ENCODE measurements at regions of chr2 and their contacts with region 1.

Region 1: DNA sequence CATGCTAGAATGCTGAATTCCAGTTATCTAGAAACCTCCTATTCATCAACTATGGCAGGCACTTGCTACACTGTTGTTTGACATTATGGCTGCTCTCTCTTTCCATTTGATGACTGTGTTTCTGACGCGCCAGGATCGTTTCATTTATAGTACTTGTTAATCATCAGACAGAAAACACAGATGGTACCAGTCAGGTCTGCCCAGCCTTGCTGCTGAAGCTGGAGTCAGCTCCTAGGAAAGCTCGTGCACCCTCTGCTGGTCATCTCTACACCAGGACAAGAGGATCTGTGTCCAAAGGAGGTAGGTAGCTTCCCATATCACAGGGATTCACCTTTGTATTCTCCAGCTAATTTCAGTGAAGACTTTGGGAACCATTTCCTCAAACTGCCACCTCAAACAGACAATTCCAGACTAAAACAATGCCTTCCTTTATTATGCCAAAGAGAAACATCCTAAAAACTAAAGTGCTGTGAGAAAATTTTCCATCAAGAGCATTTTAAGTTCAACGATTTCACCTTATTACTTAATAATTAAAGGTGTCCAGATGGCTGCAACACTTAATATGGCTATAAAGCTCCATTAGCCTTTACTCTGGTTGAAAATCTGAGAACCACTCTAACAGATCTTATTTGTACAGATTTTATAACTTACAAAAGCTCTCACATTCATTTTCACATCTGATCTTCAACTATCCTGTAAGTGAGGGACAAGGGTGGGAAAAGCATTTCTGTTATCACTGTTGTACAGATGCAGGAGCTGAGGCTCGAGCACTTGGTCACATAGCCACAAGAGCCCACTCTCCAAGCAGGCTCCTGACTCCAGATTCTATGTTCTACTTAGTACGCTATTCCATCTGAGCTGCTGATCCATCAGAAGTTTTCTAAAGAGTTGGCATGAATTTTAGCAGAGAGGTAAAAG is 17.5 kb downstream of the METTL8 start:
- DNase-seq: peak; percentile 89
- H3K4me3 Mint-ChIP-seq: no peak overlapping the region
- H3K27ac Mint-ChIP-seq: no peak overlapping the region
- H3K4me1 Mint-ChIP-seq: peaks cover 8% of the 10 kb centered on the region
- H3K27me3 Mint-ChIP-seq: no peaks in the 10 kb centered on the region

Region 2: GRCh38 chr2:170973492-170974303 is 442.6 kb before region 1 on chr2:
- CTCF ChIA-PET with region 1: interaction called, 36 read pairs
- DNase-seq: peak; percentile 83
- H3K4me3 Mint-ChIP-seq: peak overlapping the region; percentile 74
- H3K27ac Mint-ChIP-seq: peak overlapping the region; percentile 2
- H3K4me1 Mint-ChIP-seq: peaks cover 15% of the 10 kb centered on the region
- H3K27me3 Mint-ChIP-seq: peaks cover 6% of the 10 kb centered on the region

Region 3: DNA sequence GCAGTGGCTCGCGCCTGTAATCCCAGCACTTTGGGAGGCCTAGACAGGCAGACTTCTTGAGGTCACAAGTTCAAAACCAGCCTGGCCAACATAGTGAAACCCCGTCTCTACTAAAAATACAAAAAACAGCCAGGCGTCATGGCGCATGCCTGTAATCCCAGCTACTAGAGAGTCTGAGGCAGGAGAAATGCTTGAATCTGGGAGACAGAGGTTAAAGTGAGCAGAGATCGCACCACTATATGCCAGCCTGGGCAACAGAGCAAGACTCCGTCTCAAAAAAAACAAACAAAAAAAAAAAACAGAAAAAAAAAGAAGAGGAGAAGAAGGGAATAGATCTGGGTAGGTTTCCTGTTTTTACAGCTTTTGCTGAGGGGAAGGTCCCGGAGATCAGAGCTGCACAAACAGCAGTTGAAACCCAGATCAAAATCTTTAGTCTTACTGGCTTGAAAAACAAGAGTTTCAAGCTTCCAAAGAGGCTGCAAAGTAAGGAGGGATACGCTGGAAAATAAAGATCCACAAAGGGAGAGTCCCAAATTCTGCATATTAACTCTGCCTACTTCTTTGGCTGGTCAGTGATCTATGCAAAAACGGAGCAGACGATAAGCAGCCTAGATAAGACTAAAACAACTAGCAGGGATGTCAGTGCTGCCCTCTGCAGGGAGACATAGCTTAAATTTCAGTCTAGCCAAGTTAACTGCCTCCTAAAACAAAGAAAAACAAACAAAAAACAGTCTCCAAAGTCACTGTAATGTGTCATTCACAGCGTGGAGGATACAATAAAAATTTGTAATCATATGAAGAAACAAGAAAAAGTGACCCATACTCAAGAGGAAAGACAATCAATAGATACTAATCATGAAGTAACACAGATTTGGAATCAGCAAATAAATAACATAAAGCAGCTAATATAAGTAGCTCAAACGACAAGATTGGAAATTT is 329.6 kb before region 1 on chr2:
- CTCF ChIA-PET with region 1: interaction called, 14 read pairs
- DNase-seq: peak; percentile 71
- H3K4me3 Mint-ChIP-seq: peak overlapping the region; percentile 75
- H3K27ac Mint-ChIP-seq: peak overlapping the region; percentile 90
- H3K4me1 Mint-ChIP-seq: peaks cover 61% of the 10 kb centered on the region
- H3K27me3 Mint-ChIP-seq: no peaks in the 10 kb centered on the region

Region 4: GRCh38 chr2:171160119-171160955 is 255.9 kb before region 1 on chr2 and contains the start of gene TLK1:
- CTCF ChIA-PET with region 1: interaction called, 19 read pairs
- DNase-seq: peak; percentile 85
- H3K4me3 Mint-ChIP-seq: peak within 1 kb of the TSS; percentile 99
- H3K27ac Mint-ChIP-seq: peak within 1 kb of the TSS; percentile 98
- H3K4me1 Mint-ChIP-seq: peaks cover 66% of the 10 kb centered on the region
- H3K27me3 Mint-ChIP-seq: no peaks in the 10 kb centered on the region

Region 5: GRCh38 chr2:171319164-171319810 is 97.0 kb before region 1 on chr2:
- CTCF ChIA-PET with region 1: interaction called, 15 read pairs
- DNase-seq: peak; percentile 41
- H3K4me3 Mint-ChIP-seq: peak overlapping the region; percentile 22
- H3K27ac Mint-ChIP-seq: peak overlapping the region; percentile 66
- H3K4me1 Mint-ChIP-seq: peaks cover 41% of the 10 kb centered on the region
- H3K27me3 Mint-ChIP-seq: no peaks in the 10 kb centered on the region

Region 6: DNA sequence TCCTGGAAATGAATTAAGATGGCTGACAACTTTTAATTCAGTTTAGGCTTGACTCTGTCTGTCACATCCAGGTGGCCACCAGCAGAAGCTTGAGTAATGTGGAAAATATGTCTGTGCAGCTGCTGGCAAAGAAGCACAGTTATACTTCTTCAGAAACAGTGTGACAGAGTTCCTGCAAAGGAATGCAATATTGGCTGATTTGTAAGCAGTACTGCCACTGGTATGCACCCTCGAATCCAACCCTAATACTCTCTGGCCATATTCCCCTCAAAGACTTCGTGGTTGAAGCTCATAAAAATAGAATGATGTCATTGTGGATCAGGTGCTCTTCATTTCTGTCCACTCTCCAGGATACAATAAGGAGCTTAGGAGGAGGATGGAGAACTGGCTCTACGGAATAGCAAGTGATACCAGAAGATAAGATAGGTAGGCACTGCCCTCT is 68.7 kb before region 1 on chr2:
- CTCF ChIA-PET with region 1: interaction called, 11 read pairs
- DNase-seq: no peak
- H3K4me3 Mint-ChIP-seq: no peak overlapping the region
- H3K27ac Mint-ChIP-seq: no peak overlapping the region
- H3K4me1 Mint-ChIP-seq: no peaks in the 10 kb centered on the region
- H3K27me3 Mint-ChIP-seq: no peaks in the 10 kb centered on the region

Region 7: GRCh38 chr2:171447675-171448074 is 31.4 kb after region 1 on chr2:
- CTCF ChIA-PET with region 1: no interaction called
- DNase-seq: peak; percentile 24
- H3K4me3 Mint-ChIP-seq: no peak overlapping the region
- H3K27ac Mint-ChIP-seq: no peak overlapping the region
- H3K4me1 Mint-ChIP-seq: no peaks in the 10 kb centered on the region
- H3K27me3 Mint-ChIP-seq: no peaks in the 10 kb centered on the region

Region 8: GRCh38 chr2:171553858-171554257 is 137.6 kb after region 1 on chr2:
- CTCF ChIA-PET with region 1: no interaction called
- DNase-seq: no peak
- H3K4me3 Mint-ChIP-seq: no peak overlapping the region
- H3K27ac Mint-ChIP-seq: no peak overlapping the region
- H3K4me1 Mint-ChIP-seq: peaks cover 3% of the 10 kb centered on the region
- H3K27me3 Mint-ChIP-seq: peaks cover 13% of the 10 kb centered on the region